PC-3 (cell line): ENCODE measurements at regions of chr14 and their contacts with region 1.

Region 1: DNA sequence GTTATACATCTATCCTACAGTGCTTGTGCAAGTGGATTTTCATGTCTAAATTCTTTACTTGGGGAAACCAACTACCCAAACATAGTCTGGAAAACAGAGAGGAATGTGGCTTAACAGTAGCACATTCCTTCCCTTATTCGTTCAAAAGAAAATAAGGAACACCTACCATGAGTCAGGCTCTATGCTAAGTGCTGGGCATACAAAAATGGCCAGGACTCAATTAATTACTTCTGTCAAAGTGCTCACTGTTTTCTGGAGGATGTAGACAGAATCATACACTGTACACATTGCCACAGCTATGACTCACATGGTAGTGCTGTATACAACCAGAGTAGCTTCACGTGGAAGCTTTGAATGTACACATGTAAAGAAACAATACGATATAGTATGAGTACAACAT is 50.2 kb downstream of the SLC25A21 start:
- DNase-seq: peak; percentile 94
- ATAC-seq: peak; percentile 93
- H3K4me3 ChIP-seq: no peak overlapping the region
- H3K27ac ChIP-seq: peak overlapping the region; percentile 32
- H3K4me1 ChIP-seq: peaks cover 38% of the 10 kb centered on the region
- H3K27me3 ChIP-seq: no peaks in the 10 kb centered on the region
- CTCF ChIP-seq: no peak

Region 2: GRCh38 chr14:37142835-37143401 is 20.7 kb after region 1 on chr14:
- CTCF ChIA-PET with region 1: interaction called, 8 read pairs
- POLR2A ChIA-PET with region 1: interaction called, 4 read pairs
- intact Hi-C with region 1: loop called (anchors 2 kb)
- DNase-seq: peak; percentile 90
- ATAC-seq: peak; percentile 97
- H3K4me3 ChIP-seq: peak overlapping the region; percentile 22
- H3K27ac ChIP-seq: peak overlapping the region; percentile 71
- H3K4me1 ChIP-seq: peaks cover 37% of the 10 kb centered on the region
- H3K27me3 ChIP-seq: no peaks in the 10 kb centered on the region
- CTCF ChIP-seq: no peak

Region 3: GRCh38 chr14:37172024-37172869 is 50.0 kb after region 1 on chr14 and contains the start of gene SLC25A21:
- CTCF ChIA-PET with region 1: no interaction called
- POLR2A ChIA-PET with region 1: no interaction called
- intact Hi-C with region 1: loop called (anchors 2 kb)
- DNase-seq: peak; percentile 87
- ATAC-seq: peak; percentile 94
- H3K4me3 ChIP-seq: peak within 1 kb of the TSS; percentile 82
- H3K27ac ChIP-seq: peak within 1 kb of the TSS; percentile 87
- H3K4me1 ChIP-seq: peaks cover 15% of the 10 kb centered on the region
- H3K27me3 ChIP-seq: no peaks in the 10 kb centered on the region
- CTCF ChIP-seq: 0 out of 2 replicates have a peak, but pooled peaks have one; percentile 29
- total RNA-seq, gene SLC25A21: 0.87 and 1.0 TPM in 2 replicates

Region 4: GRCh38 chr14:37241198-37241597 is 118.9 kb after region 1 on chr14:
- CTCF ChIA-PET with region 1: no interaction called
- POLR2A ChIA-PET with region 1: no interaction called
- intact Hi-C with region 1: no loop called
- DNase-seq: peak; percentile 71
- ATAC-seq: peak; percentile 73
- H3K4me3 ChIP-seq: no peak overlapping the region
- H3K27ac ChIP-seq: peak overlapping the region; percentile 22; the same call in 1 of the 2 replicates
- H3K4me1 ChIP-seq: peaks cover 6% of the 10 kb centered on the region
- H3K27me3 ChIP-seq: no peaks in the 10 kb centered on the region
- CTCF ChIP-seq: no peak